Right cardiac atrium (tissue), 5 donors: ENCODE measurements at regions of chrX and their contacts with region 1.

Region 1: GRCh38 chrX:9708904-9709553 is 56.6 kb downstream of the GPR143 start:
- DNase-seq: peak; percentile 66 to 90 (median 87)
- ATAC-seq: peak; percentile 73 to 88
- H3K4me3 ChIP-seq: no peak overlapping the region
- H3K27ac ChIP-seq: no peak overlapping the region
- H3K4me1 ChIP-seq: no peaks in the 10 kb centered on the region
- H3K27me3 ChIP-seq: no peaks in the 10 kb centered on the region

Region 2: GRCh38 chrX:7996414-7996813 is 1712.6 kb before region 1 on chrX:
- intact Hi-C with region 1: loop called in 1 of 4 experiments (anchors 10 kb)
- DNase-seq: no peak
- ATAC-seq: no peak
- H3K4me3 ChIP-seq: no peak overlapping the region
- H3K27ac ChIP-seq: no peak overlapping the region
- H3K4me1 ChIP-seq: peaks cover 1% of the 10 kb centered on the region
- H3K27me3 ChIP-seq: no peaks in the 10 kb centered on the region

Region 3: GRCh38 chrX:8743126-8743732 is 965.8 kb before region 1 on chrX:
- intact Hi-C with region 1: loop called in 1 of 4 experiments (anchors 10 kb)
- DNase-seq: peak; percentile 38 to 75 (median 74)
- ATAC-seq: no peak
- H3K4me3 ChIP-seq: no peak overlapping the region
- H3K27ac ChIP-seq: no peak overlapping the region
- H3K4me1 ChIP-seq: no peaks in the 10 kb centered on the region
- H3K27me3 ChIP-seq: no peaks in the 10 kb centered on the region

Region 4: GRCh38 chrX:8815464-8816065 is 893.5 kb before region 1 on chrX:
- intact Hi-C with region 1: loop called in 1 of 4 experiments (anchors 5 kb)
- DNase-seq: no peak
- ATAC-seq: no peak
- H3K4me3 ChIP-seq: no peak overlapping the region
- H3K27ac ChIP-seq: no peak overlapping the region
- H3K4me1 ChIP-seq: no peaks in the 10 kb centered on the region
- H3K27me3 ChIP-seq: no peaks in the 10 kb centered on the region

Region 5: DNA sequence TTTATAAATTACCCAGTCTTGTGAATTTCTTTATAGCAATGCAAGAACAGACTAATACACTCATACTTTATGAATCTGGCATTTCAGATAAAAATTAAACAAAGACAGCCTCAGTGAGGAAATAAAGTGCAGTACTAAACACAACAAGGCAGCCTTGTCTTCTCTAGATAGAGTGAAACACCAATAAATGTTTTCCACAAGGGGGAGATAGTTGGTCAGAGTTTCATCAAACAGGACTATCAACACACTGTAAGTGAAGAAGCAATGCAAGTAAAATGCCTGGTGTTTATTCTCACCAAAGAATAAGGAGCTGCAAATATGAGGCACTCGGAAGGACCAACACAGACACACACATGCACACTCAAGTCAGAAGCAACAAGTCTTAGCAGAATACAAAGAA is 737.9 kb before region 1 on chrX:
- intact Hi-C with region 1: loop called in 1 of 4 experiments (anchors 5 kb)
- DNase-seq: no peak
- ATAC-seq: no peak
- H3K4me3 ChIP-seq: no peak overlapping the region
- H3K27ac ChIP-seq: no peak overlapping the region
- H3K4me1 ChIP-seq: no peaks in the 10 kb centered on the region
- H3K27me3 ChIP-seq: no peaks in the 10 kb centered on the region